Activated CD8-positive, alpha-beta T cell treated with anti-CD3 and anti-CD28 coated beads for 36 hours (primary cell): ENCODE measurements at regions of chr12 and their contacts with region 1.

Region 1: DNA sequence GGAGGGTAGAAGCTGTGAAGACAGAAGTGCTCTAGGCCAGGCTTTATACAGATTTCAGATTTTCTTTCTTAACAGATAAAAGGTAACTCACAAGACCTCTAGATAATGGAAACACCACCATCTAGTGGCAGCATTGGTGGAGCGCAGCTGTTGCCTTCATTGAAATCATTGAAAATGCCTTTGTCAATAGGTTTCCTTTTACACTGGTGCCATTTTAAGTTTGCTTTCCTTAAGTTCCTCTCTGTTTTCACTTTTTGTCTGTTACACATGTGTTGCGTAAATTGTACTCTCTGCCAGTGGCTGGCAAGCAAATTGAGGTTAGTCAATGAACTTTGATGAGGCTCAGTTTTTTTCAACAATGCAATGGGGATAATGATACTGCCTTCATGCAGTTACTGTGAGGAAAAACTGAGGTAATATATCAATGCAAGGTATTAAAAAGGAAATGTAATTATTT is 31.1 kb downstream of the ALDH1L2 start:
- DNase-seq: peak; percentile 89
- ATAC-seq: peak; percentile 87
- H3K4me3 Mint-ChIP-seq: no peak overlapping the region
- H3K27ac Mint-ChIP-seq: no peak overlapping the region
- H3K4me1 Mint-ChIP-seq: peaks cover 2% of the 10 kb centered on the region
- H3K27me3 Mint-ChIP-seq: no peaks in the 10 kb centered on the region
- CTCF ChIP-seq: peak; percentile 91

Region 2: GRCh38 chr12:104680066-104680465 is 373.1 kb before region 1 on chr12:
- CTCF ChIA-PET with region 1: no interaction called
- POLR2A ChIA-PET with region 1: no interaction called
- intact Hi-C with region 1: loop called (anchors 5 kb)
- DNase-seq: peak; percentile 69
- ATAC-seq: peak; percentile 57
- H3K4me3 Mint-ChIP-seq: no peak overlapping the region
- H3K27ac Mint-ChIP-seq: peak overlapping the region; percentile 74
- H3K4me1 Mint-ChIP-seq: peaks cover 56% of the 10 kb centered on the region
- H3K27me3 Mint-ChIP-seq: no peaks in the 10 kb centered on the region
- CTCF ChIP-seq: peak; percentile 59

Region 3: GRCh38 chr12:104877123-104877705 is 175.9 kb before region 1 on chr12:
- CTCF ChIA-PET with region 1: interaction called, 5 read pairs
- POLR2A ChIA-PET with region 1: no interaction called
- intact Hi-C with region 1: loop called (anchors 10 kb)
- DNase-seq: peak; percentile 53
- ATAC-seq: peak; percentile 42
- H3K4me3 Mint-ChIP-seq: no peak overlapping the region
- H3K27ac Mint-ChIP-seq: no peak overlapping the region
- H3K4me1 Mint-ChIP-seq: peaks cover 2% of the 10 kb centered on the region
- H3K27me3 Mint-ChIP-seq: no peaks in the 10 kb centered on the region
- CTCF ChIP-seq: peak; percentile 71

Region 4: DNA sequence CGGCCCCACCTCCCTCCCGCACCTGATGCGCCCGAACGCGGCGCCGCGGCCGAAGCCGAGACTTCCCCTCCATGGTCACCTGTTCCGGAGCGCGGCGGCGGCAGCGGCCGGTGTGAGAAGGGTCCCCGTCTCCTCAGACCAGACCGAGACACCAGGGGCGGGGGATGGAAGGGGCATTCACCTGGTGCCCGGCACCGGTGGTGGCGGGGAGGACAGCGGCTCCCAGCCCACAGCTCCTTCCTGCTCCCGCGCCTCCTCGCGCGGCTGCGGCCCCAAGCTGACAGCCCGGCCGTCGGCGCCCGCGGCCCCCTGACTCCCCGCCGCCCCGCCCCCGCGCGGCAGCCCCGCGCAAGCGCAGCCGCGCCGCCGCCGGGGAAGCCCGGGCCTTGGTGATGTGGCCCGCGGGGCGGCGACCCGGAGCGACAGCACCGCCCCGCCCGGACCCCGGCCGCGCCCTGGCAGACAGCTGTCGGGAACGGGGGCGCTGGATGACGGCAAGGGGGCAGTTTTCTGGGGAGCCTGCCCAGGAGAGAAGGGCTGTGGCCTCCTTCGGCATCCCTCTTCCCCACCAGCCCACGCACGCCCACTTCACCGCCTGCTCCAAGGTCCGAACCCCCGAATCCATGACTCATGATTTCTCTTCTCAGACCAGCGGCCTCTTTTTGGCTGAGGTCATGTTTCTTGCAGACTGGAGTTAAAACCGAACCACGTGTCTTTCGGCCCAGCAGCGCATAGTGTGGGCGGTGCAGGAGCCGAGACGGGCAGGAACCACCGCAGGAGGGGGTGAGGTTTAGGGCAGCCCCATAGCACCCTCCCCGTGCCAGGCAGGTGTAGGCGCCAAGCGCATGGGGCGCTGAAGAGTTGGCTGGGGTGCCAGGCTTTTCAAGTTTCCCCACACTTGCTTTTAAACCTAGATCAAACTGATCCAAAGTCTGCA is 94.9 kb before region 1 on chr12 and contains the start of gene SLC41A2:
- CTCF ChIA-PET with region 1: interaction called, 10 read pairs
- POLR2A ChIA-PET with region 1: no interaction called
- intact Hi-C with region 1: no loop called
- DNase-seq: peak; percentile 92
- ATAC-seq: peak; percentile 88
- H3K4me3 Mint-ChIP-seq: peak within 1 kb of the TSS; percentile 78
- H3K27ac Mint-ChIP-seq: peak within 1 kb of the TSS; percentile 84
- H3K4me1 Mint-ChIP-seq: peaks cover 24% of the 10 kb centered on the region
- H3K27me3 Mint-ChIP-seq: peaks cover 13% of the 10 kb centered on the region
- CTCF ChIP-seq: no peak
- total RNA-seq, gene SLC41A2: 5.3 to 11.1 TPM

Region 5: DNA sequence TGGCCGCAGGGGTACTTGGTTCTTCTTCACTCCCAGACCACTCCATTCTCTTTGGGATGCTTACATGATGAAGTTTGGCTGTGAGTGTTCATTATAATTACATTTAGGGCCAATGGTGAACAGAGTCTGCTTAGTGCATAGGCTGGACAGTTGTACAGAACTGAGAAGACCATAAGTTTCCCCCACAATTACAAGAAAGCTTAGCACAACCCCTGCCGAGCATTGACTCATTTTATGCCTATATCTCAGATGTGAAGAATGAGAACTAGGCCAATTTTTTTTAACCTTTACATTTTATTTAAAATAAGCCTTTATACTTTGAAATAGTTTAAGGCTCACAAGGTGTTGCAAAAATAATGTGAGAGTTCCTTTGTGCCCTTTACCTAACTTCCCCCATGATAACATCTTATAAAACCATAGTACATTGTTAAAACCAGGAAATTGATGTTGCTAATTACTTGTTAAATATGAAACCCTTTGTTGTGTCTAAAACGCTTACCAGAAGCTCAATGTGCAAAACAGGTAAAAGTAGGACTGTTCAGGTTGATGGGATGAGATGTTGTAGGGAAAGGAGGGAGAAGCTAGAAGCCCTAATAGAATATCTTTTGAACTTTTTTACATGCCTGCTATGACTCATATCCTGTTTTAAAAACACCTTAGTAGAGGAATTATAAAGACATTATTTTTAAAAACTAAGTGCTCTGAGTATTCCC is 16.1 kb before region 1 on chr12:
- CTCF ChIA-PET with region 1: interaction called, 18 read pairs
- POLR2A ChIA-PET with region 1: no interaction called
- intact Hi-C with region 1: no loop called
- DNase-seq: peak; percentile 17
- ATAC-seq: peak; percentile 52
- H3K4me3 Mint-ChIP-seq: no peak overlapping the region
- H3K27ac Mint-ChIP-seq: peak overlapping the region; percentile 88
- H3K4me1 Mint-ChIP-seq: peaks cover 43% of the 10 kb centered on the region
- H3K27me3 Mint-ChIP-seq: no peaks in the 10 kb centered on the region
- CTCF ChIP-seq: no peak

Region 6: GRCh38 chr12:105067511-105068031 is 14.4 kb after region 1 on chr12:
- CTCF ChIA-PET with region 1: interaction called, 10 read pairs
- POLR2A ChIA-PET with region 1: no interaction called
- intact Hi-C with region 1: no loop called
- DNase-seq: no peak
- ATAC-seq: no peak
- H3K4me3 Mint-ChIP-seq: no peak overlapping the region
- H3K27ac Mint-ChIP-seq: no peak overlapping the region
- H3K4me1 Mint-ChIP-seq: no peaks in the 10 kb centered on the region
- H3K27me3 Mint-ChIP-seq: no peaks in the 10 kb centered on the region
- CTCF ChIP-seq: no peak

Region 7: GRCh38 chr12:105235732-105236476 is 182.8 kb after region 1 on chr12 and contains the start of gene APPL2:
- CTCF ChIA-PET with region 1: no interaction called
- POLR2A ChIA-PET with region 1: no interaction called
- intact Hi-C with region 1: no loop called
- DNase-seq: peak; percentile 84
- ATAC-seq: peak; percentile 84
- H3K4me3 Mint-ChIP-seq: peak within 1 kb of the TSS; percentile 90
- H3K27ac Mint-ChIP-seq: peak within 1 kb of the TSS; percentile 86
- H3K4me1 Mint-ChIP-seq: peaks cover 44% of the 10 kb centered on the region
- H3K27me3 Mint-ChIP-seq: no peaks in the 10 kb centered on the region
- CTCF ChIP-seq: peak; percentile 55
- total RNA-seq, gene APPL2: 14.5 to 15.8 TPM